OCI-LY7 (cell line): ENCODE measurements at regions of chr6 and their contacts with region 1.

Region 1: DNA sequence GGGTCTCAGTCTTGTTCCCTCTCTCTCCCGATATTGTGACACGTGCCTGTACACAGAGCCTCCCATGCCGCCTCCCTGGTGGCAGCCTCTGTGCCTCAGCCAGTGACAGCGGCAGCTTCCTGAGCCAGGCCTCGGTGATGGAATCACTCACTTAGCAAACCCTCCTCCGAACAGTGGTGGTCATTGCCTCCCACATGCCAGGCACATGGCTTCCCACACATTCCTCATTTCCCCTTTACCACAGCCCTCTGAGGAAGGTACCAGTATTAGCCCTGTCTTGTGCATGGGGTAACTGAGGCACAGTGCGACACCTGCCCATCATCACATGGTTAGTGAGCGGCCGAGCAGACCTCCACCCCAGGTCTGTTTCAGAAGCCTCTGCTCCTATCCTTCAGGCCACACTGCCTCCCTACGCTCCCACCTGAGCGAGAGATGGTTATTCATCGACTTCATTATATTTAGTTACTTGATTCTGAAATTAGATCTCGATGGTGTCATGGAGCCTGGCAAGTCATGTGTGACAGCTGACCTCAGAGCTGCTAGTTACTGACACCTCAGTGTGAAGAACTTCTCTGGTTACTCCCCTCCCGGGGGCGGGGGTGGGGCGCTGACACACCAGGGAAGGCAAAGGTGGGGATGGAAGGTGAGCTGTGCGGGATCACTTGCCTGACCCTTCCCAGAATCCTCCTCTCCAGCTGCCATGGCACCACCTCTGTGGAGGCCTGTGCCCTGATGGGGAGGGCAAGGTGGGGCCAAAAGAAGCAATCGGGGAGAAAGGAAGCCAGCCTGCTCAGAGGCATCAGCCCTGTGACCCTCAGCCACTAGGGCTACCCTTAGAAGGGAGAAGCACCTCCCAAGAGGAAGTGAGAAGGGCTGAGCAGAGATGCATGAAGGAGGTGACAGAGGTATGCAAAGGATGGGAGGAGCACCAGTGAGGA is 17.9 kb downstream of the MDGA1 start:
- DNase-seq: peak; percentile 74
- H3K4me3 ChIP-seq: peak overlapping the region; percentile 18
- H3K27ac ChIP-seq: peak overlapping the region; percentile 25
- H3K4me1 ChIP-seq: peaks cover 19% of the 10 kb centered on the region
- CTCF ChIP-seq: no peak

Region 2: GRCh38 chr6:37630281-37630799 is 49.5 kb before region 1 on chr6:
- CTCF ChIA-PET with region 1: no interaction called
- POLR2A ChIA-PET with region 1: no interaction called
- intact Hi-C with region 1: loop called (anchors 1 kb)
- DNase-seq: no peak
- H3K4me3 ChIP-seq: no peak overlapping the region
- H3K27ac ChIP-seq: no peak overlapping the region
- H3K4me1 ChIP-seq: peaks cover 21% of the 10 kb centered on the region
- CTCF ChIP-seq: no peak

Region 3: GRCh38 chr6:37826188-37826587 is 146.4 kb after region 1 on chr6:
- CTCF ChIA-PET with region 1: no interaction called
- POLR2A ChIA-PET with region 1: no interaction called
- intact Hi-C with region 1: no loop called
- DNase-seq: no peak
- H3K4me3 ChIP-seq: no peak overlapping the region
- H3K27ac ChIP-seq: no peak overlapping the region
- H3K4me1 ChIP-seq: peaks cover 13% of the 10 kb centered on the region
- CTCF ChIP-seq: no peak